ENCODE measurements at regions of chr11 and their contacts with region 1.

Region 1: GRCh38 chr11:58900479-58901420 is 38.5 kb upstream of the GLYATL1 start:
- DNase-seq: peak; percentile 85
- H3K4me3 ChIP-seq: peak overlapping the region in 2 of 3 experiments; percentile 1 to 27
- H3K27ac ChIP-seq: no peak overlapping the region
- H3K4me1 ChIP-seq: peaks cover 20% of the 10 kb centered on the region
- H3K27me3 ChIP-seq: no peaks in the 10 kb centered on the region
- CTCF ChIP-seq: peak; percentile 80 to 86

Region 2: DNA sequence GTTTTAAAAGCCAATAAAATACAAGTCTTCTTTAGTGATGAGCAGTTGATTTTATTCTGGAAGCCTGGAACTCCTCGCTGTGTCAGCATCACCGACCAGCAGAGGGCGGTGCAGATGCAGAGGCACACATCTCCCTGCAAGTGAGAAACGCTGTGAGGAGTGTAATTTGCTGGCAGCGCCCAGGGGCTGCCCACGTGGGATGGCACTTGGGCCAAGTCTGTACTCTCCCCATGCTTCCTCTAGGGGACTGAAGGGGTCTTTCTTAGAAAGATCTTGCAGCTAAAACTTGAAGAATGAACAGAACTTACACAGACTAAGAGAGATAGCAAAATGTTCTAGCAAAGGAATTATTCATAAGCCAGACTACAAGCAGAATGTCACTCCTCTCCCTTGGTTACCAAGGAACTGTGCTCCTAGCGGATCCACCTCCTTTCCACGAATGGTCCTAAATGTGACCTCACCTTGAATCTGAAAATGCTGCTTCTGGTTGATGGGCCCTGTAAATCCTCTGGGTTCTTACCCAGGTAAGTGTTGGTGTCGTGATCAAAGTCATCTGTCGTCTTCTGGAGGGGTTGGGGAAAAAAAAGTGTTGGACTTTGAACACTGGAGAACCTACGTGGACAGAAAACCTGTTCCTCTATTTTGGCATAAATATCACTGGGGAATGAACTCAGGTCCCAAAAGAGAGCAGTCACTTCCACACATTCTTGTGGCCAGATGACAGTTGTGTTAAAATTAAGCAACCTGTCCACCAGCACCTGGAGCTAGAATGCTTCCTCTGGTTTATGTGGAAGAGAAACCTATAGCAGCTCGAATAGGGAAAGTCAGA is 246.5 kb before region 1 on chr11:
- CTCF ChIA-PET with region 1: interaction called, 13 read pairs
- dilution Hi-C with region 1: no loop called
- in situ Hi-C with region 1: no loop called
- intact Hi-C with region 1: loop called (anchors 1 kb)
- DNase-seq: peak; percentile 60
- H3K4me3 ChIP-seq: no peak overlapping the region
- H3K27ac ChIP-seq: no peak overlapping the region
- H3K4me1 ChIP-seq: peaks cover 16% of the 10 kb centered on the region
- H3K27me3 ChIP-seq: no peaks in the 10 kb centered on the region
- CTCF ChIP-seq: peak; percentile 91 to 97

Region 3: DNA sequence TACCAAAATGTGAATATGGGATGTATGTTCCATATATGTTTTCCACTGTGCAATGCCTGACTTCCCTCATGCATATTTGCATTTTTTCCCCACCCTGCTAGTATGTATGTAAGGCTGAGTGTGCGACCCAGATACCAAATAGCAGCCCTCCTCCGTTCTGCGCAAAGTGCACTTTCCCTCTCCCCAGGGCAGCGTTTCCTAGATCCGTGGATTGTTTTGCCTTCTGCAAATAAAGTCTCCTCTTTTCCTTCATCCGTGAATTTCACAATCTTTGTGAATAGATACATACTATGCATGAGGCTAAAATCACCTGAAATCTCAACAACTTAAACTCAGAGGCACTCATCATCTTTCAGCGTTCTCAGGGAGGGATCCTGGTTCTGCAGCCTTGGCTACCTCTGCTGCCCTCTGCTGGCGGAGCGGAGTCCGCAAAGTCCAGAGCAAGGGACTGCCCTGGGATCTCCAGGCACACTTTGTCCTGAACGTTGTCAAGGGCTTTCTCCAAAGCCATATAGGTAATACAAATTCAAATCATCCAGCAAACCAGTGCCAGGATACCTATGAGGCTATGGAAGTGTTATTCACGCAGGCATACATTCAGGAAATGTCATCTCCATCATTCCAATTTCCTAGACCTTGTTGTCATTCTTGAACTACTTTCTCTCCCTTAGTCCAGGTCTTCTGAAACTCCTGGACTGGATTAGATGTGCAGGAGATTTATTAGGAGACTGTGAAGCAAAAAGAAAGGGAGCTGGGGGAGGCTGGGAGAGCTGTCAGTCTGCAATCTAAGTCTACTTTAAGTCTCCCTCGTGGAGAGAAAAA is 225.2 kb before region 1 on chr11:
- CTCF ChIA-PET with region 1: no interaction called
- dilution Hi-C with region 1: no loop called
- in situ Hi-C with region 1: loop called in 1 of 2 experiments (anchors 25 kb)
- intact Hi-C with region 1: loop called (anchors 1 kb)
- DNase-seq: peak; percentile 44
- H3K4me3 ChIP-seq: no peak overlapping the region
- H3K27ac ChIP-seq: no peak overlapping the region
- H3K4me1 ChIP-seq: peaks cover 5% of the 10 kb centered on the region
- H3K27me3 ChIP-seq: no peaks in the 10 kb centered on the region
- CTCF ChIP-seq: peak; percentile 97 to 99

Region 4: DNA sequence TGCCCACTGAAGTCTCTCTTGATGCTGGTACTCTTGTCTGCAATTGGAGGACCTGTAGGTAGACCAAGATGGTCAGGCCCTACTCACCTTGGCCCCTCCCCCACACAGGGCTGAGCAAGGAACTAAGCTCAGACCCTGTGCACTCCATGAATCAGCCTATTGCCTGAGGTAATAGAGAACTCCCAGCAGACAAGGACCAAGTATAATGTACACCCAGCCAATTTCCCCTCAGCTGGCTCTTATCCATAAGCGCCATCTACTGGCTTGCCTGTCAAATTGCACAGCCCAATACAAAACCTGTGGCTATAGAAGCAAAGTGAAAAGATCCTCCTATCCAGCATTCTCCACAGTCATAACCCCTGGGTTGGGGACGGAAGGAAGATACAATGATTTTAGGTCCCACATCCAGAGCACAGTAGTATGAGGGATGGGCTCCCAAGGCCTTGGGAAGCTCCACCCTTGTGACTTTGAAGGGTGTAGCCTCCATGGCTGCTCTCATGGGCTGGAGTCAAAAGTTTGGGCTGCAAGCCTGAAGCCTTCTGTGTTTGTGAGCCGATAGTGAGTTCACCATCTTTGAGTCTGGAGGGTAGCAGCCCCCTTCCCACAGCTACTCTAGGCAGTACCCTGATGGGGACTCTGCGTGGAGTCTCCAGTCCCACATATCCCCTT is 112.3 kb before region 1 on chr11:
- CTCF ChIA-PET with region 1: interaction called, 5 read pairs
- dilution Hi-C with region 1: no loop called
- in situ Hi-C with region 1: no loop called
- intact Hi-C with region 1: loop called (anchors 1 kb)
- DNase-seq: peak; percentile 77
- H3K4me3 ChIP-seq: no peak overlapping the region
- H3K27ac ChIP-seq: peak overlapping the region; percentile 62
- H3K4me1 ChIP-seq: peaks cover 20% of the 10 kb centered on the region
- H3K27me3 ChIP-seq: no peaks in the 10 kb centered on the region
- CTCF ChIP-seq: peak; percentile 94 to 97

Region 5: DNA sequence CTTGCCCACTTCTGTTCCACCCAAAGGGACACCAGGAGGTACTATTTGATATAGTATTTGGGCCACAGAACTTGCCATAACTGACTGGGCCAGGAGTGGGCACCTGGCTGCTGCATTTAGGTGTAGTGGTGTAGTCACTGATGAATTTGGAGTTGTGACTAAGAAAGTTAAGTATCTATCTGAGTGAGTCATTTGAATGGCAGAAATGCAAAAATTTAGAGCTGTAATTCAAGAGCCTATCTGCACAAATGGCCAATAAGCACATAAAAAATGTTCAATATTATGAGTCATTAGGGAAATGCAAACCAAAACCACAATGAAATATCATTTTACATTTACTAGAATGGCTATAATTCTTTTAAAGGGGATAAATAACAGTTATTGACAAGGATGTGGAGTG is 71.0 kb before region 1 on chr11:
- CTCF ChIA-PET with region 1: interaction called, 10 read pairs
- dilution Hi-C with region 1: no loop called
- in situ Hi-C with region 1: no loop called
- intact Hi-C with region 1: loop called (anchors 1 kb)
- DNase-seq: peak; percentile 86
- H3K4me3 ChIP-seq: no peak overlapping the region
- H3K27ac ChIP-seq: peak overlapping the region; percentile 28
- H3K4me1 ChIP-seq: peaks cover 24% of the 10 kb centered on the region
- H3K27me3 ChIP-seq: no peaks in the 10 kb centered on the region
- CTCF ChIP-seq: peak; percentile 9 to 42

Region 6: DNA sequence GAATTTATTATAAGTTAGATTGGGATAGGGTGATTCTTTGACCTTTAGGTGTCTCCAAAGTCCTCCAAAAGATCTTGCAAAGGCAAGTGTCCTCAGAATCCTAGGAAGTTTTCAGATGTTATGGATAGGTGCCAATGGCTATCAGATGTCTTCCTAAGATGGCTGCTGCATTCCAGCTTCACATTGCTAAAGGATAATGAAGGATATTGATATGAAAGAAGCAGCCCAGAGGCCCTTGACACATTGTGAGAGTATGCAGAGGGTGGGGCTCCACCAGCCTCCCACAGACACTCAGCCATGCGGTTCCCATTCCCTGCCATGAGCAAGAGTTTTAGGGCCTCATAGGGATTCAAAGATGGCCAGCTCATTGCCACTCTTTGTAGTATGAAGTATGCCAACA is 34.0 kb before region 1 on chr11:
- CTCF ChIA-PET with region 1: no interaction called
- dilution Hi-C with region 1: no loop called
- in situ Hi-C with region 1: no loop called
- intact Hi-C with region 1: no loop called
- DNase-seq: peak; percentile 35
- H3K4me3 ChIP-seq: no peak overlapping the region
- H3K27ac ChIP-seq: no peak overlapping the region
- H3K4me1 ChIP-seq: peaks cover 9% of the 10 kb centered on the region
- H3K27me3 ChIP-seq: no peaks in the 10 kb centered on the region
- CTCF ChIP-seq: no peak

Region 7: DNA sequence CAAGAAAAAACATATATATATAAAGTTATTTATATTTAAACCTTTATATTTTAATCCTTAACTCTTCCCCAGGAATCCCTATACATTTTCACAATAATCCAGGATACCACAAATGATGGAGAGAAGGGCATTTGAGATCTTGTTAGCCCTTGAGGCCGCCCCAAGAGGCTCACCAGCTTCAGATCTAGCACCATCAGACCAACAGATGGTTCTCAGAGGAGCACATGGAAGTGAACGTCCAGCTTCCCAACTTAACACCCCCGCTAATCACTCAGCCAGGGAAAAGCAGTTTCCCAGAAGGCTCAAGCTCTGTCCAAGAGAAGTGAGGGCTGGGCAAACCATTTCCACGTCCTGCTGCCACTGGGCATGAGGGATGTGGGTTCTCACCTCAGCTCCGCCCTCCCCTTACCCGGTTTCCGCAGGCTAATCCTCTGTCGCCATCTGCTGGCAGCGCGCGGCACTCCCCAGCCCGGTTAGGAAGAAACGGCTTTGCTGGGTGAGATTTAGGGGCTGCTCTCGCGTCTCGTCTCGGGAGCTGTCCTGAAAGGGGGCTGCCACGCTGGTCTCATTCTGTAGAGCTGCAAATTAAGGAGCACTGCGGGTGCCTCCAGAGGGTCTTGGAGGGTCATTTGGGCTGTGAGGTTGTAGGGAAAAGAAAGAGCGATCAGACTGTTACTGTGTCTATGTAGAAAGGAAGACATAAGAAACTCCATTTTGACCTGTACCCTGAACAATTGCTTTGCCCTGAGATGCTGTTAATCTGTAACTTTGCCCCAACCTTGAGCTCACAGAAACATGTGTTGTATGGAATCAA is 235.1 kb after region 1 on chr11:
- CTCF ChIA-PET with region 1: interaction called, 4 read pairs
- dilution Hi-C with region 1: loop called (anchors 10 kb)
- in situ Hi-C with region 1: no loop called
- intact Hi-C with region 1: loop called (anchors 2 kb)
- DNase-seq: peak; percentile 36
- H3K4me3 ChIP-seq: no peak overlapping the region
- H3K27ac ChIP-seq: no peak overlapping the region
- H3K4me1 ChIP-seq: peaks cover 6% of the 10 kb centered on the region
- H3K27me3 ChIP-seq: no peaks in the 10 kb centered on the region
- CTCF ChIP-seq: peak; percentile 99 to 100

Measured in mammary epithelial cell (primary cell).